GM12878 (cell line): ENCODE measurements at regions of chr7 and their contacts with region 1.

Region 1: GRCh38 chr7:93036807-93037206 is 81.0 kb downstream of the SAMD9 start:
- DNase-seq: peak; percentile 61
- ATAC-seq: peak; percentile 95
- H3K4me3 ChIP-seq: no peak overlapping the region
- H3K27ac ChIP-seq: 0 out of 2 replicates have a peak overlapping the region, but pooled peaks have one; percentile 3
- H3K4me1 ChIP-seq: peaks cover 14% of the 10 kb centered on the region
- H3K27me3 ChIP-seq: no peaks in the 10 kb centered on the region
- CTCF ChIP-seq: no peak
- EP300 ChIP-seq: no peak
- POLR2A ChIP-seq: no peak
- RAD21 ChIP-seq: no peak

Region 2: DNA sequence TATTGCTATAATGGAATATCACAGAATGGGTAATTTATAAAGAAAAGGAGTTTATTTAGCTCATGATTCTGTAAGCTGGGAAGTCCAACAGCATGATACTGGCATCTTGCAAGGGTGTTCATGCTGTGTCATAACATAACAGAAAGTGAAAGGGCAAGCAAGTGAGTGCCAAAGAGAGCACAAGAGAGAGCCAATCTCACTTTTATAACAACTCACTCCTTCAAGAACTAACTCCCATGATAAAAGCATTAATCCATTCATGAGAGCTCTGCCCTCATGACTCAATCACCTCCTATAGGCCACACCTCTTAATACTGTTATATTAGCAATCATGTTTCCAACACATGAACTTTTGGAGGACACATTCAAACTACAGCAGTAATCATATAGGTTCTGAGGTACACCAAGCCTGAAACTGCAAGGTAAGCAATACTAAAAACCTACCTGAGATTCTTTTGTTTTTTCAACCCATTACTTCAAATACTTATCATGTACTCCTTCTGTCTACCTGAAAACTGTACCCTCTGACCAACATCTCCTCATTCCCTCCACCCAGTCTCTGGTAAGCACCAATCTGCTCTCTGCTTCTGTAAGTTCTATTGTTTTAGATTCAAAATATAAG is 1376.0 kb before region 1 on chr7:
- CTCF ChIA-PET with region 1: no interaction called
- POLR2A ChIA-PET with region 1: no interaction called
- RAD21 ChIA-PET with region 1: no interaction called
- SMC1A ChIA-PET with region 1: no interaction called
- in situ Hi-C with region 1: no loop called
- intact Hi-C with region 1: no loop called
- DNase-seq: peak; percentile 2
- ATAC-seq: peak; percentile 64
- H3K4me3 ChIP-seq: no peak overlapping the region
- H3K27ac ChIP-seq: no peak overlapping the region
- H3K4me1 ChIP-seq: no peaks in the 10 kb centered on the region
- H3K27me3 ChIP-seq: no peaks in the 10 kb centered on the region
- CTCF ChIP-seq: no peak
- EP300 ChIP-seq: no peak
- POLR2A ChIP-seq: no peak
- RAD21 ChIP-seq: no peak

Region 3: DNA sequence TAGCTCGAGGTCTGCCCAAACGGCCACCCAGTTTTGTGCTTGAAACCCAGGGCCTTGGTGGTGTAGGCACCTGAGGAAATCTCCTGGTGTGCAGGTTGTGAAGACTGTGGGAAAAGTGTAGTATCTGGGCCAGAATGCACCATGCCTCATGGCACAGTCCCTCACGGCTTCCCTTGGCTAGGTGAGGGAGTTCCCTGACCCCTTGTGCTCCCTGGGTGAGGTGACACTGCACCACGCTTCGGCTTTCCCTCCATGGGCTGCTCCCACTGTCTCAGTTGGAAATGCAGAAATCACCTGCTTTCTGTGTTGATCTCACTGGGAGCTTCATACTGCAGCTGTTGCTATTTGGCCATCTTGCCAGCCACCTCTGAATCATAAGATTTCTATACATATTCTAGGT is 138.0 kb before region 1 on chr7:
- CTCF ChIA-PET with region 1: no interaction called
- POLR2A ChIA-PET with region 1: no interaction called
- RAD21 ChIA-PET with region 1: no interaction called
- SMC1A ChIA-PET with region 1: no interaction called
- in situ Hi-C with region 1: no loop called
- intact Hi-C with region 1: no loop called
- DNase-seq: no peak
- ATAC-seq: no peak
- H3K4me3 ChIP-seq: no peak overlapping the region
- H3K27ac ChIP-seq: no peak overlapping the region
- H3K4me1 ChIP-seq: no peaks in the 10 kb centered on the region
- H3K27me3 ChIP-seq: no peaks in the 10 kb centered on the region
- CTCF ChIP-seq: no peak
- EP300 ChIP-seq: no peak
- POLR2A ChIP-seq: no peak
- RAD21 ChIP-seq: no peak

Region 4: GRCh38 chr7:93025389-93025788 is 11.4 kb before region 1 on chr7:
- CTCF ChIA-PET with region 1: no interaction called
- POLR2A ChIA-PET with region 1: no interaction called
- RAD21 ChIA-PET with region 1: interaction called, 4 read pairs
- SMC1A ChIA-PET with region 1: interaction called, 11 read pairs
- in situ Hi-C with region 1: no loop called
- intact Hi-C with region 1: no loop called
- DNase-seq: no peak
- ATAC-seq: no peak
- H3K4me3 ChIP-seq: no peak overlapping the region
- H3K27ac ChIP-seq: no peak overlapping the region
- H3K4me1 ChIP-seq: no peaks in the 10 kb centered on the region
- H3K27me3 ChIP-seq: no peaks in the 10 kb centered on the region
- CTCF ChIP-seq: no peak
- EP300 ChIP-seq: no peak
- POLR2A ChIP-seq: no peak
- RAD21 ChIP-seq: no peak